ENCODE measurements at regions of chr6 and their contacts with region 1.

Region 1: GRCh38 chr6:136600818-136601217 is 50.6 kb upstream of the MAP7 start:
- DNase-seq: no peak
- CTCF ChIP-seq: no peak

Region 2: DNA sequence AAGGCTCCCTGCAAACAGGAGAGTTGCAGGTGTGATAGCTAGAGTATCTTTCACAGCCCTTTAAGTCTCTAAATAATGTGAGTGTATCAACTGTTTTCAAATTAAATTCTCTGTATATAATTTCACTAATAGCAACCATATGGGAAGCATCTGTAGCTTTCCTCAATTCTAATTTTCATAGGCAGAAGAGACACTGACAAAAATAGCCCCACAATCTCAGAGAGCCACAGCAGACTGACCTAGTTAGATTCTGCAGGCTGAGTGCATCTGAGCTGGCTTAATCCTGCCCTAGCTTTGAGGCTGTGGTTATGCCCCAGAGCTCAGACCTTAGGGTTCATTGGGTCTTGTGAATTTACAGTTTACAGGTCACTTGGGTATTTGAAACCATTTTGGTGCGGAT is 114.5 kb before region 1 on chr6:
- CTCF ChIA-PET with region 1: no interaction called
- POLR2A ChIA-PET with region 1: no interaction called
- DNase-seq: no peak
- CTCF ChIP-seq: no peak

Region 3: DNA sequence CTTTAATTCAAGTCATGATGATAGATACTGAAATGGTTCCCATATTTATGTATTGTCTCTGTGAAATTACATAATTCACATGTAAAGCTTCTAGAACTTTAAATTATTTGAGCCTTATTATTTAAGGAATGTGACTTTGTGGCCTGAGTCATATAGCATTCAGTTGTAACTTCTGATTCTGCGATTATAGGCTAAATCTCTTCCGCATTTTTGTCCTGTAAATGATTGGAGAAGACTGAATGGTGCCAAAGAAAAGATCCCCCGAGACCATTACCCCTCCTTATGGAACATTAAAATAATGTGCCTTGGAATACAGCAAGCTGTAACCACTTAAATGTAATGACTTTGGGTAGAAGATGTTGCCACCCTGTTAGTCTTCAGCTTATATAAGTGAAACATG is 12.7 kb after region 1 on chr6:
- CTCF ChIA-PET with region 1: interaction called, 15 read pairs
- POLR2A ChIA-PET with region 1: no interaction called
- DNase-seq: no peak
- CTCF ChIP-seq: no peak